ENCODE measurements at regions of chr20 and their contacts with region 1.

Region 1: GRCh38 chr20:38645980-38646858 is 44.6 kb downstream of the ARHGAP40 start:
- DNase-seq: peak; percentile 92
- CTCF ChIP-seq: peak; percentile 99

Region 2: DNA sequence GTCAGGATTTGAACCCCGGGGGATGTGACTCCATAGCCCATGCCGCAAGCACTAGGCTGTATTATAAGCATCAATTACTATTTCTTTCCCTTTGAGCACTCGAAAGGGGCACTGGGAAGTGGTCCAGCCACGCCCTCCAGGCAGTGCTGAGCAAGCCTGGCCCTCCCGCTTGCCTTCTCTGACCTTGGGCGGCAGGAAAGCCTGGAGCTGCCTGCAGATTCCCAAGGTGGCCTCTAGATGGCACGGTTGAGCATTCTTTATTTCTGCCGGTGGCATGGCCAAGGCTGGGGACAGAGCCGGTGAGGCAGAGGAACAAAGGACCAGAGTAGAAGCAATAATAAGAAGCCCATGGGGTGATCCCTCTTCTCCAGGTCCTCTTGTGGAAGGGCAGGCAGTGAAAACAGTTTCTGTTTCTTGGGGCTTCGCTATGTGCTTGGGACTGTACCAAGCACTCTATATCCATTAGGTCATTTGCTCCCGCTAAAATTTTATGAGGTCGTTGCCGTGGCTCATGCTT is 12.6 kb before region 1 on chr20:
- CTCF ChIA-PET with region 1: interaction called, 44 read pairs
- POLR2A ChIA-PET with region 1: no interaction called
- DNase-seq: peak; percentile 83
- CTCF ChIP-seq: peak; percentile 94

Region 3: GRCh38 chr20:38658879-38659596 is 12.8 kb after region 1 on chr20:
- CTCF ChIA-PET with region 1: interaction called, 39 read pairs
- POLR2A ChIA-PET with region 1: no interaction called
- DNase-seq: peak; percentile 63
- CTCF ChIP-seq: peak; percentile 56

Region 4: DNA sequence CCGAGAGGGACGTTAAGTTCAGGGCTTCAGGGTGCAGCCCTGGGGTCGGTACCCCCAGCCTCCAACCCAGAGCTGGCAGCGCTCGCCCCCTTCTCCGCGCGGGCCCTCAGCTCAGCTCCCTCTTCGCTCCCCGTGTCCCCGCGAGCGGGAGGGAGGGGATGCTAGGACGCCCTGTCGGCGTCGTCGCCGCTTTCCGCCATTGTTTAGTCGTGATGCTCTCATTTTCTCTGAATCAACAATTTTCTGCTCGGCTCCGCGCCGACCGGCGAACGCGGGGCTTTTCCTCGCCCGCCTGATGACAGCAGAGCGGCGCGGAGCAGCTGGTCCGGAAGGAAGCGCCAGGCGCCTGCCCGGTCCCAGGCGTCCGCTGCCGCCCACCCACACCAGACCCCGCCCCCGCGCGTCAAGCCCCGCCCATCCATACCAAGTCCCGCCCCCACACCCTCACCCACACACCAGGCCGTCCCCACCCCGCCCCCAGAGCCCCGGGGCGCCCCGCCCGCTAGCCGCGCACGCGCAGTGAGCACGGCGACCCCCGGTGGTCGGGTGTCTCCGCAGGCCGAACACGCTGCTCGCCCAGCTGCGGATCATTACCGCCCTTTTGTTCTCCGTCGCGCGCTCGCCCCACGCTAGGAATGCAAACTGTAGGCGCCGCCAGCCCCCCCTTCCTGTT is 28.0 kb after region 1 on chr20:
- CTCF ChIA-PET with region 1: no interaction called
- POLR2A ChIA-PET with region 1: no interaction called
- DNase-seq: peak; percentile 87
- CTCF ChIP-seq: no peak

Region 5: DNA sequence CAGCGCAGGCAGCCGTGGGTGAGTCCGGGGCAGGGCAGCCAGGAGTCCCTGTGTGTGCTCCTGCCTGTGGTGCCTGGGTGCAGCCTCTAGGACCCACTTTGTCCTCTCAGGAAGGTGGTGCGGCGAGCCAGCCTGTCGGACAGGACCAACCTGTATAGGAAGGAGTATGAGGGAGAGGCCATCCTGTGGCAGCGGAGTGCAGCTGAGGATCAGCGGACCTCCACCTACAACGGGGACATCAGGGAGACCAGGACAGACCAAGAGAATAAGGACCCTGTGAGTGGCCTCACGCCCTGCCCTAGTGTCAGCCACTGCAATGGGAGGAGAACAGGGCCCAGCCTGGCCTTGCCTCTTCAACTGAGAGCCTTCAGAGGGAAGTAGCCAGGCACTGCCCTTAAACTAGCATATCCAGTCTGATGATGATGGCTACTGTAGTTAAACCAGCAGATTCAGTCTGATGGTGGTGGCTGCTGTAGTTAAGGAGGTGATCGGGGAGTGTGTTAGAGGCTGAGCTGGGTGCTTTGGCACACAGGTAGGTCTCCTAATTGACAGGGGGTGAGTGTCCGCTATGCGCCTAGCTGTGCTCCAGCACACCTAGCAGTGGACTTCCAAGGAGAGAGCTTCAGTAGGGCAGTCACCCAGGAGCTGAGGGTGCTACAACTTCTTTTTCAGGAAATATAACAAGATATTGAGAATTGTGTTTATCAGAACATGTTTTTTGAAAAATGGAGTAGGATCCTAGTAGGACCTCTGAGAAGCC is 261.9 kb after region 1 on chr20:
- CTCF ChIA-PET with region 1: no interaction called
- POLR2A ChIA-PET with region 1: no interaction called
- DNase-seq: no peak
- CTCF ChIP-seq: no peak